ENCODE measurements at regions of chr4 and their contacts with region 1.

Region 1: DNA sequence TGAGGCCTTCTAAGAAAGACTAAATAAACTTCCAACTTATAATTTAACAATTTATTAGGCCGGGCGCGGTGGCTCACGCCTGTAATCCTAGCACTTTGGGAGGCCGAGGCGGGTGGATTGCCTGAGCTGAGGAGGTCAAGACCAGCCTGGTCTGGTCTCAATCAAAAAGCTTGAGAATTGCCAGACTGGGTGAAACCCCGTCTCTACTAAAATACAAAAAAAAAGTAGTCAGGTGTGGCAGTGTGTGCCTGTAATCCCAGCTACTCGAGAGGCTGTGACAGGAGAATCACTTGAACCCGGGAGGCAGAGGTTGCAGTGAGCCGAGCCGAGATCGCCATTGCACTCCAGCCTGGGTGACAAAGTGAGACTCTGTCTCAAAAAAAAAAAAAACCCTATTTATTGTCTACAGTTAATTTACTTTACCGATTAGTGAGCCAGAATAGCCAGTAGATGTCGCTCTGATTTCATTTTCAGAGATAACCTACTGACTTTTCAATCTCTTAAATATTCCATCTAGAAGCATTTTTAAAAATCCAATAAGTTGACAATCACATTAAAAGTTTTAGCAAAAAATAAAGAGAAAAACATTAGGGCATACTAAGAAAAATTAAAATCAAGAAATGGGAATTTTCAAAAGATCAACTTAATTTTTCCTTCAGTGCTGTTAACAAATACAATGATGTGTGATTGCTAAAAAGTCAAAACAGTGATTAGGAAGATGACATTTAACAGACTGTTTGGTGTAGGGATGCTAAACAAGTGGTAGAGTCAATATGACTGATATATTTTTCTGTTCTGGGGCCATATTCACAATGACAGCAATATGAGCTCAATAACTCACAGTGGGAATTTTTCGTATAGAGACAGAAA is 4.3 kb upstream of the SHROOM3 start:
- DNase-seq: no peak
- H3K4me3 ChIP-seq: no peak overlapping the region
- H3K27ac ChIP-seq: no peak overlapping the region
- H3K4me1 ChIP-seq: no peaks in the 10 kb centered on the region
- H3K27me3 ChIP-seq: no peaks in the 10 kb centered on the region
- CTCF ChIP-seq: peak in 2 of 3 experiments; percentile 56 to 79

Region 2: DNA sequence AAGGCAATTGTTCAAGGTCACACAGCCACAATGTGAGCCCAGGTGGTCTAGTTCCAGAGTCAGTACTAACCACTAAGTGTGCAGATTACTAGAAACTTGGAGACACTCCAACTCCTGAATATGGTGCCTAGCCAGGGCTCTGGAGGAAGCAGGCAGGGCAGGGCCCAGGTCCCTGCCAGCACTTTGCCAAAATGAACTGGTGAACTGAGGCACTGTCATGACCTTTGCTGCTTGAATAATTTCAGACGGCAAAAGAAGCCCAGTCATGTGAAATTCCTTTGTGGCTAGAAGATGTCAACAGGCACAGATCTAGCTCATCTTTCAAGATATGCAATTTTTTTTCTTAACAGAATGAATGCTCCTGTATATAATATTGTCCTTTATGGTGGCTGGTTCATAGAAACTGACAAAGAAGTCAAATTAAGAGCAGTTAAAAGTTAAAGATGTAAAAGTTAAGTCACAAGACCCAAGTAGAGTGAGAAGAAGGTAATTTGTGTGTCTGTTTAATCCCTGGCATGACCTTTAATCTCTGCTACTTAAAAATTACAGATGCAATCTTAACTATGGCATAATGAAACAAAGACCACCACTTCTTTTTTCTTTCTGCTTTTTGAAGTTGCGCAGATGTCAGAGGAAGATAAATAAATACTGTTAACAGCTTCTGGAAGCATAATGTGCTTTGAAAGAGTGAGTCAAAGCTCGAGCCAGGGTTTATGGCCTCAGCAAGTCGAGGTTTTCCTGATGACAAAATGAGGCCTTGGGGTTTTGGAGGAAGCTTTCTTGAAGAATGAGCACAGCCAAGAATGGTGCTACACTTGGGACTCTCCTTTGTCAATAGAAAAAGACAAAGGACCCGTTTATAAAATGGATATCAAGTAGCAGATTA is 58.4 kb after region 1 on chr4:
- intact Hi-C with region 1: no loop called
- DNase-seq: no peak
- H3K4me3 ChIP-seq: no peak overlapping the region
- H3K27ac ChIP-seq: no peak overlapping the region
- H3K4me1 ChIP-seq: no peaks in the 10 kb centered on the region
- H3K27me3 ChIP-seq: no peaks in the 10 kb centered on the region
- CTCF ChIP-seq: no peak

Region 3: GRCh38 chr4:76504613-76505465 is 74.1 kb after region 1 on chr4:
- intact Hi-C with region 1: loop called (anchors 1 kb)
- DNase-seq: no peak
- H3K4me3 ChIP-seq: no peak overlapping the region
- H3K27ac ChIP-seq: no peak overlapping the region
- H3K4me1 ChIP-seq: no peaks in the 10 kb centered on the region
- H3K27me3 ChIP-seq: no peaks in the 10 kb centered on the region
- CTCF ChIP-seq: peak; percentile 60 to 72 (median 60)

Region 4: DNA sequence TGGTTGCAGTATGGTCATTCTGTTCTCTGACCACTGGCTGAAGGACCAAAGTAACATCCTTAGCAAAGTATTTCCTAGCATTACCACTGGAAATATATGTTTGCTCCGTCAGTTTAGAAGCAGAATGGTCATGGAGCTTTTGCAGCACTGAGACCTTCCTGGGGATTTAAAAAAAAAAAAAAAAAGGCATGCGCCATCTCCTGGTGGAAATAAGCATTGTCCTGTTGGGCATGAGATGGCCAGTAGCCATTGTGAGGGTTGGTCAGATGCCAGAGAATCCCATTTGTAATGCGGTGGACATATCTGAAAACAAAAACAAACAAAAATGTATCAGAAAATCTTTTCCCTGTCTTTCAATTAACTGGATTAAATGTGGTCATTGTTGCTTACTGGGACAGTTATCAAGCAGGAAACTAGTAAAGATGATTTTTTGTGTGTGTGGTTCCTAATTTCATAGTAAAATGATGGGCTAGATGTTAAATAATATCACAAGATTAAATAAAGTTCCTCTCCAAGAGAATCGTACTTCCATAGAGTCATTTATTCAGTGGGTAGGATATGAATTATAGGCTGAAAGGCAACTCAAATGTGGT is 327.6 kb after region 1 on chr4:
- intact Hi-C with region 1: loop called (anchors 5 kb)
- DNase-seq: no peak
- H3K4me3 ChIP-seq: no peak overlapping the region
- H3K27ac ChIP-seq: peak overlapping the region; percentile 51 to 72
- H3K4me1 ChIP-seq: peaks cover 13 to 22% of the 10 kb centered on the region in 2 donors
- H3K27me3 ChIP-seq: no peaks in the 10 kb centered on the region
- CTCF ChIP-seq: peak; percentile 51 to 78 (median 70)

Region 5: DNA sequence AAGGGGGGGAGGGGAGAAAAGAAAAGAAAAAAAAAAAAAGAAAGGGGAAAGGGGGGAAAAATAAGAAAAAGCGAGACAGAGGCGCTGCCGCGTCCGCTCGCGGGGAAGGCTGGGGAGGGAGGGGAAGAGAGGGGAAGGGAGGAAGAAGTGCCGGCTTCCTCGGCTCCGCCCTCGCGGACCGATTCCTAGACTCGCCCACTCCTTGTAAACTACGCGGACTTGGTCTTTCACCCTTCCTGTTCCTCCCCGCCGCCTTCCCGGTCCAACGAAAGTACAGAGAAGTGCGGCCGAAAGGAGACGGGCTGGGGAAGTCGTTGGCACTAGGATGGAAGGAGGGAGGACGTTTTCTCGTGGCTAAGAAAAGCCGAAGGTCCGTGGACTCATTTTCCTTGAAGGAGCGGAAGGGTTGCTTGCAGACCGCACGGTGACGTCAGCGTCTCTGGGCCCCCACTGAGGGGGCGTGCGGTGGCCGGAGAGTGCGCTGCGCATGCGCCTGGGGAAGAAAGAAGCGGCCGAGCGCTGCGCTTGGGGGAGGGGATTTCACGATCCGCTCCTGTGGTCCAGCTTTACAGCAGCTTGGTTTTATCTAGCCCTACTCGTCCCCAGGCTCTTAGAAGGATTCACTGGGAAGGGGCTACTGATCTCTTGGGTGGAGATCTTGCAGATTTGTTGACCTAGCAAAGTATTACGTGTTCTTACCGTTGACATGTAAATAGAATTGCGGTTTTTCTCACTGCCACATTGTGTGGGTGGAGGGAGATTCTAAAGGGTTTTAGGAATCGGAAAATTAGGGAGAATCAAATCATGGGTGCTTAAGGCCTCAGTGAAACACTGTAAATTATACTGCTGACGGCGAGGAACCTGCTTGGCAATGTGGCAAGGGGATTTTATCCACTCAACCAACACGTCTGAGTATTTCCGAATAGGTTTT is 645.4 kb after region 1 on chr4 and contains the start of gene CCNI:
- intact Hi-C with region 1: loop called (anchors 10 kb)
- DNase-seq: peak; percentile 77 to 97
- H3K4me3 ChIP-seq: peak within 1 kb of the TSS; percentile 88 to 97
- H3K27ac ChIP-seq: peak within 1 kb of the TSS; percentile 99 to 100
- H3K4me1 ChIP-seq: peaks cover 4 to 5% of the 10 kb centered on the region in 2 donors
- H3K27me3 ChIP-seq: no peaks in the 10 kb centered on the region
- CTCF ChIP-seq: no peak
- total RNA-seq, gene CCNI: 140 TPM

Region 6: GRCh38 chr4:78414116-78414515 is 1983.4 kb after region 1 on chr4:
- intact Hi-C with region 1: no loop called
- DNase-seq: no peak
- H3K4me3 ChIP-seq: no peak overlapping the region
- H3K27ac ChIP-seq: no peak overlapping the region
- H3K4me1 ChIP-seq: no peaks in the 10 kb centered on the region
- H3K27me3 ChIP-seq: no peaks in the 10 kb centered on the region
- CTCF ChIP-seq: no peak